T-cell (primary cell): ENCODE measurements at regions of chr12 and their contacts with region 1.

Region 1: DNA sequence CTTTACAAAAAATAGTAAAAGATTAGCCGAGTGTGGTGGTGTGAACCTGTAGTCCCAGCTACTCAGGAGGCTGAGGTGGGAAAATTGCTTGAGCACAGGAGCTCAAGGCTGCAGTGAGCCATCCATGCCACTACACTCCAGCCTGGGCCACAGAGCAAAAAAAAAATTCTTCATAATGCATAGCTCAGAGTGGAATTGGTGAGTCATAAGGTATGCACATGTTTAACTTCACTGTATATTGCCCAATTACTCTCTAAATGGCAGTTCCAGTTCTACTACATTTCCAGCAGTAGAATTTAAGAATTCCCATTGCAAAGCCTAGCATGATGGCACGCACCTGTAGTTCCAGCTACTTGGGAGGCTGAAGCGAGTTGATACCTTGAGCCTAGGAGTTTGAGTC is 26.9 kb upstream of the CLIP1 start:
- DNase-seq: no peak
- ATAC-seq: no peak
- H3K4me3 ChIP-seq: no peak overlapping the region
- H3K4me3 Mint-ChIP-seq: no peak overlapping the region
- H3K27ac ChIP-seq: no peak overlapping the region
- H3K27ac Mint-ChIP-seq: no peak overlapping the region
- H3K4me1 ChIP-seq: peaks cover 18 to 23% of the 10 kb centered on the region in 2 experiments
- H3K4me1 Mint-ChIP-seq: peaks cover 24 to 25% (median 25%) of the 10 kb centered on the region in 3 donors
- H3K27me3 ChIP-seq: no peaks in the 10 kb centered on the region
- H3K27me3 Mint-ChIP-seq: no peaks in the 10 kb centered on the region

Region 2: DNA sequence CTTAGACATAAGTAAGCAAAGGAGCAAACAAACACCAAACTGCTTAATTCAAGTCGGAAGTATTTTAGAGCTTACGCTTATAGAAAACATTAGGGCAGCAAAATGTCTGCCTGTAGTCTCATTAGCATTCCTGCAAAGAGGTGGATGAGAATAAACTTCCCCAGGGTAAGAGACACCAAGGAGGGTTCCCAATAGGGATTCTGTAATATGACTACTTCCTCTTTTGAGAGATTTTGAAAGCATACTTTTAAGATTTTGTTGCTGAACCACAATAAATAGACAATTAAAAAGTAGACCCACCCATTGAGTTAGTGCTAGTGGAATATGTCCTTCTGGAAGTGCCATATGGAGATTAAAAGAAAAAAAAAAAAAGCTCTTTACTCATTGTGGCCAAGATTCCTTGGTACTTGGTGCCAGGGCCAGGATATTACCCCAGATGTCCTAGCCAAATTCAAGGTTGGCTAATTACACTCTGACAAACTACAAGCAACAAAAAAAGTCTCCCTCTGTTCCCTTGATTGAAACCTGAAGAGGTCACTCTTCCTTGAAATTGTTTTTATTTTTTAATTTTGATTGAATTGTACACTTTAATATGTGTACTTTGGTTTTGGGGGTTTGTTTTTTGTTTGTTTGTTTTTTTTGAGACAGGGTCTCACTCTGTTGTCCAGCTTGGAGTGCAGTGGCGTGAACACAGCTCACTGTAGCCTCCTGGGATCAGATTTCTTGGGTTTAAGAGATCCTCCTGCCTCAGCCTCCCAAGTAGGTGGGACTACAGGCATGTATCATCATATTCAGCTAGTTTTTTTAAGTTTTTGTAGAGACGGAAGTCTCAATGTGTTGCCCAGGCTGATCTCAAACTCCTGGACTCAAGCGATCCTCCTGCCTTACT is 35.6 kb before region 1 on chr12:
- CTCF ChIA-PET with region 1: no interaction called
- POLR2A ChIA-PET with region 1: no interaction called
- DNase-seq: no peak
- ATAC-seq: no peak
- H3K4me3 ChIP-seq: no peak overlapping the region
- H3K4me3 Mint-ChIP-seq: no peak overlapping the region
- H3K27ac ChIP-seq: no peak overlapping the region
- H3K27ac Mint-ChIP-seq: peak overlapping the region; percentile 88 to 89
- H3K4me1 ChIP-seq: peaks cover 0 to 13% of the 10 kb centered on the region in 2 experiments
- H3K4me1 Mint-ChIP-seq: peaks cover 29 to 41% (median 39%) of the 10 kb centered on the region in 3 donors
- H3K27me3 ChIP-seq: no peaks in the 10 kb centered on the region
- H3K27me3 Mint-ChIP-seq: no peaks in the 10 kb centered on the region

Region 3: DNA sequence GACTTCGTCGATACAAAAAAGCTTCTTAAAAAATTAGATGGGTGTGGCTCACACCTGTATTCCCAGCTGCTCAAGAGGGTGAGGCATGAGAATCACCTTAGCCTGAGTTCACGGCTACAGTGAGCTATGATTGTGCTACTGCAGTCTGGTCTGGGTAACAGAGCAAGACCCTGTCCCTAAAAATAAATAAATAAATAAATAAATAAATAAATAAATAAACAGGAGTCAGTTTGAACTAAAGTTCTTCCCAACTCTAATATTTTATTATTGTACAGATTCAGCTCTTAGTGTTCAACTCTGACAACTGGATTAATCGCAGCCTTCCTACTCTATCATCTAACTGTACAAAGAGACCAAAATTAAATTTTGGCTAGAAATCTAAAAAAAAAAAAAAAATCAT is 14.2 kb before region 1 on chr12:
- CTCF ChIA-PET with region 1: no interaction called
- POLR2A ChIA-PET with region 1: interaction called in 1 of 2 experiments, 10 read pairs
- DNase-seq: no peak
- ATAC-seq: no peak
- H3K4me3 ChIP-seq: no peak overlapping the region
- H3K4me3 Mint-ChIP-seq: no peak overlapping the region
- H3K27ac ChIP-seq: no peak overlapping the region
- H3K27ac Mint-ChIP-seq: no peak overlapping the region
- H3K4me1 ChIP-seq: no peaks in the 10 kb centered on the region
- H3K4me1 Mint-ChIP-seq: no peaks in the 10 kb centered on the region
- H3K27me3 ChIP-seq: no peaks in the 10 kb centered on the region
- H3K27me3 Mint-ChIP-seq: no peaks in the 10 kb centered on the region

Region 4: DNA sequence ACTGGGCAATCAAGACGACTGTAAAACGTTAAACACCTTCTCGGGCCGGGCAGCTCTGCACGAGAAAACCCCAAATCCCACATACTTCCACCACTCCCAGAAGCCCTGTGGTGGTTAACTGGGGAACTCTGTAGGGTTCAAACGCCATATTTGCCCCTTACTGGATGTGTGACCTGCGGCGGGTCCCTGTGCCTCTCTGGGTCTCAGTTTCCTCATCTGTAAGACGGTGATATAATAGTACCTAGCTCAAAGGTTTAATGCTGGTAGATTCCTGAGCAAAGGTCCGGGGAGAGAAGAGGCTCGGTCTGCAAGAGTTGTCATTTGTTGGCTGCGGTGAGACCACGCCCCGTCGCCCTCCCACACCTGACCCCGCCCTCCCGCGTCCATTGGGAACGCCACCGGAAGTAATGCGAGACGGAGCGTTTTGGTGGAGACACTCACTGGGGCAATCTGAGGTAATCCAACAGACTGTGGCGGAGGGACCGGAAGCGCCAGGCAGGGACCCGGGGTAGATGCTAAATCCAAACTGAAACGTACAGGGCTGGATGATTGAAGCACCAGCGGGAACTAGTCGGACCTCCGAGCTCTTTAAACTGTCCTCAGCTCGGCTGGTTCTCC is 525.0 kb after region 1 on chr12:
- CTCF ChIA-PET with region 1: no interaction called
- POLR2A ChIA-PET with region 1: interaction called in 1 of 2 experiments, 12 read pairs
- DNase-seq: peak; percentile 96 to 100 (median 98)
- ATAC-seq: peak; percentile 85 to 87 (median 86)
- H3K4me3 ChIP-seq: peak overlapping the region; percentile 92 to 94
- H3K4me3 Mint-ChIP-seq: peak overlapping the region; percentile 97
- H3K27ac ChIP-seq: peak overlapping the region; percentile 99
- H3K27ac Mint-ChIP-seq: peak overlapping the region; percentile 99 to 100
- H3K4me1 ChIP-seq: peaks cover 10 to 48% of the 10 kb centered on the region in 2 experiments
- H3K4me1 Mint-ChIP-seq: peaks cover 20 to 40% (median 31%) of the 10 kb centered on the region in 3 donors
- H3K27me3 ChIP-seq: no peaks in the 10 kb centered on the region
- H3K27me3 Mint-ChIP-seq: no peaks in the 10 kb centered on the region